Left ventricle myocardium inferior (tissue), 1 donor: ENCODE measurements at regions of chr3 and their contacts with region 1.

Region 1: GRCh38 chr3:114454551-114455251 is 160.9 kb downstream of the TIGIT start:
- DNase-seq: no peak
- H3K4me3 ChIP-seq: peak overlapping the region; percentile 64
- H3K27ac ChIP-seq: peak overlapping the region; percentile 88
- H3K4me1 ChIP-seq: peaks cover 85% of the 10 kb centered on the region
- H3K27me3 ChIP-seq: no peaks in the 10 kb centered on the region
- CTCF ChIP-seq: no peak

Region 2: DNA sequence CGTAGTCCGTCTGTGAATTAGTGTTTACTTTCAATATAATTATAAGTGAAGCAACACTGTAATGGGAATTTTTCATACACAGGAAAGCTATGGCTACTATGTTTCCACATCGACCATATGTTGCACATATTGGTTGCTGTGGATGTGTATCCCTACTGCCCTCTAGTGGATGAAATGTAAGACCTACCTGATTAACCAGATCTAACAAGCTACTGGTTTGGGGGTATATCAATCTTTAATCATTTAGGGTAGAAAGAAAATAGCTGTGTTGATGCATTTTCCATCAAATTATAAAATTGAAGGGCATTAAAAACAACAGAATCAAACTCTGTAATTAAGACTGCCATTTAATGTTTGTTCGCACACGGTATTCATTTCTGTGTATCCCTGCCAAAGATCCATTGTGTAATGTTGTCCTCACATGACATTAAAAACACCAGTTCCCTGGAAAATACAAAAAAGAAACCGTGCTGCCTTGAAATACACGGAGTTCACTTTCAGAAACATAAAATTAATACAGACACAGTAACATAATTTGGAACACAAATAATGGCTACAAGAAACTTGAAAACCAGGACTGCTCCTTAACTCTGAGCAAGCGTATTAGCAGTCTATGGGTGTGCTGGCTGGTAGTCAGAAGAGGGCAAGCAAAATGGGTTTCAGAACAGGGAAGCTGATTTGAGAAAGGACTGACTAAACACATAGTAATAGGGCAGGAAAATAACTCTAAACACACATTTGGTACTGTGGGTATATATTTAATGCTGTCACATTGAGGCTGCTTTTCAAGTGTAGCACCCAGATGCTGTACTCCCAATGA is 35.8 kb before region 1 on chr3:
- intact Hi-C with region 1: loop called (anchors 5 kb)
- DNase-seq: no peak
- H3K4me3 ChIP-seq: peak overlapping the region; percentile 47
- H3K27ac ChIP-seq: peak overlapping the region; percentile 75
- H3K4me1 ChIP-seq: peaks cover 67% of the 10 kb centered on the region
- H3K27me3 ChIP-seq: no peaks in the 10 kb centered on the region
- CTCF ChIP-seq: peak; percentile 91

Region 3: GRCh38 chr3:114624571-114625181 is 170.0 kb after region 1 on chr3:
- intact Hi-C with region 1: loop called (anchors 10 kb)
- DNase-seq: peak; percentile 92
- H3K4me3 ChIP-seq: peak overlapping the region; percentile 68
- H3K27ac ChIP-seq: peak overlapping the region; percentile 95
- H3K4me1 ChIP-seq: peaks cover 90% of the 10 kb centered on the region
- H3K27me3 ChIP-seq: no peaks in the 10 kb centered on the region
- CTCF ChIP-seq: no peak